ENCODE measurements at regions of chr20 and their contacts with region 1.

Region 1: GRCh38 chr20:63657937-63658748 is at the start of gene RTEL1:
- DNase-seq: peak; percentile 89
- ATAC-seq: peak; percentile 87
- H3K4me3 Mint-ChIP-seq: peak within 1 kb of the TSS; percentile 97
- H3K27ac Mint-ChIP-seq: peak within 1 kb of the TSS; percentile 94
- H3K4me1 Mint-ChIP-seq: peaks cover 41% of the 10 kb centered on the region
- H3K27me3 Mint-ChIP-seq: no peaks in the 10 kb centered on the region
- total RNA-seq, gene RTEL1: 49.8 to 54.3 TPM

Region 2: DNA sequence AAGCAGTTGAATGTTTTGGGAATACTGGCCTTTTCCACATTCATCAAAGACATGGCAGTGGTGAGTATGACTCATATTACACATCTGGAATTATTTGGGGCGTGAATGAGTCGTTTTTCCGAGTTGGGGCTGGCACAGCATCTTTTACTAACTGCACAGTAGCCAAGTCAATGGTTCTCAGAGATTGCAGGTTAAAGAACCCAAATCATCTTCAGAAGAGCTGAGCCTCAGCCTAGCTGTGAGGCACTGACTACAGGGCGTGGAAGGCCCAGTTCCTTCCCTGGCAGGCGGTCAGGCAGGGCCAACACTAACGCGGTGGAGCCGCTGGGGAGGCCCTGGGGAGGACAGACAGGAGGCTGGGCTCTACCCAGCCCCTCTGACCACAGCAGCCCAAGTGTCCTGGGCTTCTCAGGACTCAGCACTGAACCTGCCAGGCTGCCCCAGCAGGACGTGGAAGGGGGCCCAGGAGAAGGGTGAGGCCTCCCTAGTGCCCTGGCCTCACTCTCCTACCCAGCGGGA is 64.0 kb before region 1 on chr20:
- CTCF ChIA-PET with region 1: no interaction called
- POLR2A ChIA-PET with region 1: no interaction called
- DNase-seq: no peak
- ATAC-seq: no peak
- H3K4me3 Mint-ChIP-seq: no peak overlapping the region
- H3K27ac Mint-ChIP-seq: no peak overlapping the region
- H3K4me1 Mint-ChIP-seq: no peaks in the 10 kb centered on the region
- H3K27me3 Mint-ChIP-seq: no peaks in the 10 kb centered on the region

Region 3: GRCh38 chr20:63627129-63627750 is 30.9 kb before region 1 on chr20:
- CTCF ChIA-PET with region 1: interaction called, 3 read pairs
- POLR2A ChIA-PET with region 1: interaction called, 14 read pairs
- DNase-seq: peak; percentile 96
- ATAC-seq: peak; percentile 85
- H3K4me3 Mint-ChIP-seq: peak overlapping the region; percentile 96
- H3K27ac Mint-ChIP-seq: peak overlapping the region; percentile 94
- H3K4me1 Mint-ChIP-seq: peaks cover 22% of the 10 kb centered on the region
- H3K27me3 Mint-ChIP-seq: no peaks in the 10 kb centered on the region

Region 4: DNA sequence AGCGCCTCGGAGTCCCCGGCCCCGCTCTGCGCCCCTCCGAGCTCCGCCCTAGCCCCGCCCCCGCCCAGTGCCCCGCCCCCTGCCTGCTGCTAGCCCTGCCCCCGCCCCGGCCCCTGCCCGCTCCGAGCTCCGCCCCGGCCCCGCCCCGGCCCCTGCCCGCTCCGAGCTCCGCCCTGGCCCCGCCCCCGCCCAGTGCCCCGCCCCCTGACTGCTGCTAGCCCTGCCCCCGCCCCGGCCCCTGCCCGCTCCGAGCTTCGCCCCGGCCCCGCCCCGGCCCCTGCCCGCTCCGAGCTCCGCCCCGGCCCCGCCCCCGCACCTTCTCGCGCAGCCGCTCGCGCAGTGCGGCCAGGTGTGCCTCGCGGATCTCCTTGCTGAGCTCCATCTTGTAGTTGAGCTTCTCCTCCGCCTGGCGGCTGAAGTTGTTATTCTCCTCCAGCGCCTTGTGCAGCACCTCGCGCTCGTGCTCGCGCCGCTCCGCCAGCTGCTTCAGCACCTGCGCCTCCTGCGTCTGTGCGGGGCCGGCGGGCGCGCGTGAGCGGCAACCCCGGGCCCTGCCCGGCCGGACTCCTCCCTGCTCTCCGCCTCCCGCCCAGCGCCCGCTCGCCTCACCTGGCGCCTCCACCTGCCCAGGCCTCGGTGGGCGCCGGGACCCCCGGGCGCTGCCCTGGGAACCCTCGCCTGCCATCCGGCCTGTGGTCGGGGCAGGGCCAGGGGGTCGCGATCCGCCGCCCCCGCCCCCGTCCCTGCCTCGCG is 16.2 kb before region 1 on chr20:
- CTCF ChIA-PET with region 1: interaction called, 18 read pairs
- POLR2A ChIA-PET with region 1: interaction called, 19 read pairs
- DNase-seq: peak; percentile 98
- ATAC-seq: peak; percentile 81
- H3K4me3 Mint-ChIP-seq: peak overlapping the region; percentile 74
- H3K27ac Mint-ChIP-seq: peak overlapping the region; percentile 52
- H3K4me1 Mint-ChIP-seq: peaks cover 25% of the 10 kb centered on the region
- H3K27me3 Mint-ChIP-seq: no peaks in the 10 kb centered on the region

Region 5: DNA sequence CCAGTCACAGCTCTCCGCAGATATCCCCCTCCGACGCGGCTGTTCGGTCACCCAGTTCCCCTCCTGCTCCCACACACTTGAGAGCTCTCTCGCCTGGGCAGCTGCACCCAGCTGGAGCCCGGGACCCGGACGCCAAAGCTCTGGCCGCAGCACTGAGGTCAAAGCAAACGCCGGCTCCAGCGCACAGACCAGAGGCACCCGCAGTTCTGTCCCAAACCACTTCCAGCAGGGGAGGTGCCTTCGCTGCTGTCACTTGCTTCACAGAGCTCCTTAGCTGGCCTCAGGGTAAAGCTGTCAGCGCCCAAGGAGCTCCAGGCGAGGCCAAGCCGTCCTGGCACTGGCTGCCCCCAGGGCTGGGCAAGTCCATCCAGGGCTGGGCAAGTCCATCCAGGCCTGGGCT is 109.3 kb after region 1 on chr20:
- CTCF ChIA-PET with region 1: no interaction called
- POLR2A ChIA-PET with region 1: no interaction called
- DNase-seq: no peak
- ATAC-seq: no peak
- H3K4me3 Mint-ChIP-seq: no peak overlapping the region
- H3K27ac Mint-ChIP-seq: no peak overlapping the region
- H3K4me1 Mint-ChIP-seq: no peaks in the 10 kb centered on the region
- H3K27me3 Mint-ChIP-seq: peaks cover 5% of the 10 kb centered on the region